ENCODE measurements at regions of chr19 and their contacts with region 1.

Region 1: GRCh38 chr19:42132851-42133528 is 744 bp upstream of the POU2F2 start:
- DNase-seq: peak; percentile 91
- CTCF ChIP-seq: peak; percentile 96

Region 2: GRCh38 chr19:42113641-42114348 is 19.2 kb before region 1 on chr19:
- CTCF ChIA-PET with region 1: interaction called, 44 read pairs
- POLR2A ChIA-PET with region 1: no interaction called
- DNase-seq: peak; percentile 62
- CTCF ChIP-seq: no peak

Region 3: GRCh38 chr19:42121656-42122069 is 11.3 kb before region 1 on chr19:
- CTCF ChIA-PET with region 1: interaction called, 29 read pairs
- POLR2A ChIA-PET with region 1: interaction called, 3 read pairs
- DNase-seq: peak; percentile 82
- CTCF ChIP-seq: no peak

Region 4: DNA sequence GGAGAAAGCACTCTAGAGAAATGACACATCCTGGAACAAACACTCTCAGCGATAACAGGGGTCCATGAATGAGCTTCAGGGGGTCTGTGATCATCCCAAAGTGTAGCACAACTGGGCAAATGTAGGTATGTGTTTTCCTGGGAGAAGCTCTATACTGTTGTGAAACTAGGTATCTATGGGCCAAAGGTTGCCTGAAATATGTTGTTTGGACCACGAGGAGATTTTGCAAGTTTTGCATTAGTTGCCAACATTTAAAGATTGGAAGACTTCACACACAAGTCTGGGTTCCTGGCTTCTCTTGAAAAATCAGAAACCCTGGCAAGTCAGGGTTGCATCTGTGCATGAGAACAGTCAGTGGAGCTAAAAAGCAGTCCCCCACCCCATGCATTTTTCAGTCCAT is 25.9 kb after region 1 on chr19:
- CTCF ChIA-PET with region 1: interaction called, 10 read pairs
- POLR2A ChIA-PET with region 1: no interaction called
- DNase-seq: no peak
- CTCF ChIP-seq: no peak

Region 5: DNA sequence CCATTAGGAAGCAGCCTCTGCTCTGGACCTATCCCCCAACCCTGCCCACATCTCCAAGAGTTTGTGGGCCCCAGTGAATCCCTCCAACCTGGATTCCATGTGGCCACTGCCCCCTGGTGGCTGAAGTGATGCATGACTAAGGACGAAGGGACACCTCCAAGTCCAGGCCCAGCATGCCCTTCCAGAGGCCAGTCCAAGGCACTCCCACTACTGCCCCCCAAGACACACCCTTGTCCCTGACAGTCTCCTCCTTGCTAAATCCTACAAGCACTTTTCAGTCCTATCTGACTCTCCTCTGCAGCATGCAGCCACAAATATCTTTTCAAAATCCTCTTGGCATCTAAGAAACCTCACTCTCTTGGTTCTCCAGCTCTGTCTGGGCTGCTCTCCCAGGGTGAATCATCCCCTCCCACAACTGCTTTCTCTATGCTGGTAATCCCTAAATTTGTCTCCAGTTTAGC is 51.4 kb after region 1 on chr19:
- CTCF ChIA-PET with region 1: interaction called, 27 read pairs
- POLR2A ChIA-PET with region 1: no interaction called
- DNase-seq: peak; percentile 80
- CTCF ChIP-seq: peak; percentile 92

Region 6: GRCh38 chr19:42283143-42284065 is 150.4 kb after region 1 on chr19:
- CTCF ChIA-PET with region 1: interaction called, 15 read pairs
- POLR2A ChIA-PET with region 1: no interaction called
- DNase-seq: peak; percentile 95
- CTCF ChIP-seq: no peak

Measured in GM10248 (cell line).